Psoas muscle (tissue), 8 donors: ENCODE measurements at regions of chr17 and their contacts with region 1.

Region 1: DNA sequence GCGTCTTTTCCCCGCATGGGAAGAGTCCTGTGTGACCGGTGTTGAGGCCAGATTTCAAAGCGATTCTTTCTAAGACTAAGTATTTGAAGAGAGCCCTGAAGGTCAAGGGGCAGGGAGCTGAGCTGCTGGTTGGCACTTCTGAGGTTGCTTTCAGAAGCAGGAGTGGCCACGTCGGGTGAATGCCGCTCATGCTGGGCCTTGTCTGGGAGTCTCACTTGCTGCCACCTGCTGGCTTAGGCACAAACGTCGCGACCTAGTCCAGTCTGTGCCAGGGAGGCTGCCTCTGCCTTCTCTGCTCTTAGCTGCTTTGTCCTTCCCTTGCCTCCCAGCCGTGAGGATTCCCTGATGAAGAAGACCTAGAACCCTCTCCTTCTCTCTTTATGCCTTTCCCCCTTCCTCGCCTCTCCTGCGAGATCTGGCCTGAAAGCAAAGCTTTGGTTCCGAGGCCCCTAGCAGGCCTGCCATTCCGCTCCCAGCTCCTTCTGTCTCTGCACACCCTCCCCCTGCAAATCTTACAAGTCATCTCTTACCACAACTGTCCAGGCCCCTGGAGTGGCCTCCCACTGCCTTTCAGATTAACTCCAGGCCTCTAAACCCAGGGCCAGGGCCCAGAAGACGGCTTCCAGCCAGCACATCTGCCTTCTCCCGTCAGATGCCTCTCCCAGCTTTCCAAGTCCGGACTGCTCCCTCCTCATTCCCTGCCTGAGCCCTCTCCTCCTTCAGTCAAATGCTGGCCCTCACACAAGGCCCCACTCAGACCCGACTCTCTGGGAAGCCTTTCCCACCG is 11.4 kb downstream of the CTNS start:
- DNase-seq: peak in 1 of 2 donors; percentile 72
- ATAC-seq: peak; percentile 74 to 84 (median 82)
- H3K4me3 ChIP-seq: no peak overlapping the region
- H3K27ac ChIP-seq: no peak overlapping the region
- H3K4me1 ChIP-seq: no peaks in the 10 kb centered on the region
- H3K27me3 ChIP-seq: no peaks in the 10 kb centered on the region
- CTCF ChIP-seq: peak; percentile 49

Region 2: DNA sequence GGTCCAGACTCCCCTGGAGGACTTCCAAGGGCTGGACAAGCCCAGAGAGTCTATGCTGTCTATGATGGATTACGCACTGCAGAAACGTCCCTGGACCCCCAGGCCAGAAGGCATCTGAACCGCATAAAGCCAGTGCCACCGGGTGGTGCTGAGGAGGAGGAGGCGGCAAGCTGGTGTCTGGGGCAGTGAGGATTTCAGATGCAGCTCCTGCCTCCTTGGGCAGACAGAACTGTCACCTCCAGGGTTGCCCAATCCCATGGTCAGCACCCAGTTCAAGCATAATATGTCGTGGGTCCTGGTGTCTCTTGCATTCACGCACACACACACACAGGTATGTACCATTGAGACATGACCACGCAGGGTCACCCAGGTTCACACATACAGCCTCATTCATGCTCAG is 826.1 kb before region 1 on chr17:
- intact Hi-C with region 1: loop called in 1 of 2 experiments (anchors 5 kb)
- DNase-seq: no peak
- ATAC-seq: no peak
- H3K4me3 ChIP-seq: no peak overlapping the region
- H3K27ac ChIP-seq: no peak overlapping the region
- H3K4me1 ChIP-seq: no peaks in the 10 kb centered on the region
- H3K27me3 ChIP-seq: peaks cover 0 to 5% (median 2%) of the 10 kb centered on the region in 3 donors
- CTCF ChIP-seq: no peak

Region 3: DNA sequence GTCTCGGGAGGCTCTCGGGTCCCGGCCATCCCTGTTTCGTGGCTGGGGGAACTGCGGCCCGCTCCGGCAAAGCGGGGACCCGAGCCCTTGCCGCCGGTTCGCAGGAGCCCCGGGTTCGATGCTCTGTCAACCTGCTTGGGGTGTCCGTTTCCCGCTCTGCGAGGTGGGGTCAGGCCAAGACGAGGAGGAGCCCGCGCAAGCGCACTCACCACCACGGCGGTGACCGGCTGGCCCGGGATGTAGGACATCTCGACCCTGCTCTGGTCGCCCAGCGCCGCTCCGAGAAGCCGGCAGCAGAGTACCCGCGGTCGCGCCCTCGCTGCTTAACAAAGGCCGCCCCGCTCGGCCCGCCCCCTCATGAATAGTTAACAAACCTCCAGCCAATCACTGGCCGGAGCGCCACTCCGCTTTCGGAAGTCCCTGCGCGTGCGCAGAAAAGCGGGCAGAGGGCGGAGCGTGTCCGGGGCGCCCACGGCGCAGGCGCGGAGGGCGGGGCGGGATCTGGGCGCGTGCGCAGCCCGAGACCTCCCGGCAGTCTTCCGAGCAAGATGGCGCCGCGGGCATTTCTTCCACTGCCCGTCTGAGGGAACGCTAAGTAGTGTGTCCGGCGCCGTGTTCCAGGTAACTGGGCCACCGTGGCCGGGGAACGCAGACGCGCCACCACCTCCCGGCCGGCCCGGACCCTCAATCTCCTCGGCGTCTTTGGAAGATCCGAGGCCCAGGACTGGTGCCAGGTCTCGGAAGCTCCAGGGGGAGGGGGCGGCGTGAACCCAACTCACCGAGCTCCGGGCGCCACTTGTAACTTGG is 20.5 kb after region 1 on chr17 and contains the starts of genes EMC6 and TAX1BP3:
- intact Hi-C with region 1: no loop called
- DNase-seq: peak; percentile 99 to 100
- ATAC-seq: peak; percentile 87 to 91 (median 90)
- H3K4me3 ChIP-seq: peak within 1 kb of the TSS; percentile 97
- H3K27ac ChIP-seq: peak within 1 kb of the TSS; percentile 96
- H3K4me1 ChIP-seq: peaks cover 35% of the 10 kb centered on the region
- H3K27me3 ChIP-seq: no peaks in the 10 kb centered on the region
- CTCF ChIP-seq: no peak
- total RNA-seq, gene EMC6: 91.6 to 135 (median 97.0) TPM
- total RNA-seq, gene TAX1BP3: 20.4 to 23.9 (median 22.8) TPM